Posterior cingulate gyrus (tissue), 11 donors: ENCODE measurements at regions of chr10 and their contacts with region 1.

Region 1: GRCh38 chr10:29386342-29386999 is 97.6 kb downstream of the LYZL1 start:
- DNase-seq: no peak

Region 2: DNA sequence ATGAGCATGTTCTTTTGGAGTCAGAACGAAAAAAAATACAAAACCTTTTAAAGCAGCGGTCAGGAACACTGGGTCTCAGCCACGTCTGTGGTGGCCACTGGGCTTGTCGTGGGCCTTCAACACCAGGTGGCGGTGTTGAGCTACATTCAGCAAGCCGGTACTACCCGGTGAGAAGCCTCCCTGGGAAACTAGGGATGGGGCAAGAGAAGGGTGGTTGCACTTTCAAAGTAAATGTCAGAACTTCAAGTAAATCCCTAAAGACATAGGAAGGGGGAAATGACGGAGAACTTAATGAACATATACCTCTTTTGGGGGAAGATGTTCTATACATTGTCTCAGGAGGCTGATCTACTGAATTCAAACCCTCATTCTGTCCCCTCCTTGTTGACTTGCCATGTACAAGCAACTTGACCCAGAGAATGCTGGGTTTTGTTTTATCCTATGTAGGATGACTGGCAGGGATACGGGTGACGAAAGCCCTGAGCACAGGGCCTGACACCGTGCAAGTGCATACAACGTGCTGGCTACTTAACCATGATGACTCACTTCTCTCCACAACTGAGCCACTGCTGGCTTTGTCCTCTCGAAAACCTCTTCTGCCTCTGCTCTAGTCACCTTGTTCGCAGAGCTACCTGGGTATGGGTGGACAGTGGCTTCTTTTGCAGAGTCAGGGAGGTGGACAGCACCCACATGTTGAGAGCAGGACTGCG is 758.1 kb before region 1 on chr10:
- intact Hi-C with region 1: loop called (anchors 2 kb)
- DNase-seq: peak; percentile 50 to 96 (median 86)

Region 3: GRCh38 chr10:29437871-29438270 is 51.4 kb after region 1 on chr10:
- intact Hi-C with region 1: no loop called
- DNase-seq: no peak

Region 4: DNA sequence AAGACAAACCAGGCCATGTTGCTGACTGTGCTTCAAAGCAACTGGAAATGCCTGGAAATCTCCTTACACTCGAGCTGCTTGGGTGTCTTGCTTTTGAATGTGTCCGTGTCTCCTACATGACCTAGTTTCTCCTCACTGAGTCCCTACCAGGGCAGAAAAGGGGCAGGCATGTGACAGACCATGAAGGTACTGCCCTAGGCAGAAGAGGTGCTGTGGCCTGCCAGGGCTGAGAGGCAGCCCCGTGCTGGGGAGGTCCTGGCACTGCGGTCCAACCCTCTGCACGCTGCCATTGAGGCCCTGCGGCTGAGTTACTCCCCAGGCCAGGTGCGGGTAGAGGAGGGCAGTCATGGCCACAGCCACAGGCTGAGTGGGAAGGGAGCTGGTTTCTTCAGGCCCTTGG is 61.7 kb after region 1 on chr10:
- intact Hi-C with region 1: loop called (anchors 2 kb)
- DNase-seq: no peak

Region 5: GRCh38 chr10:29496341-29497162 is 110.1 kb after region 1 on chr10:
- intact Hi-C with region 1: loop called (anchors 10 kb)
- DNase-seq: peak; percentile 41 to 95 (median 79)